ENCODE measurements at regions of chr12 and their contacts with region 1.

Region 1: DNA sequence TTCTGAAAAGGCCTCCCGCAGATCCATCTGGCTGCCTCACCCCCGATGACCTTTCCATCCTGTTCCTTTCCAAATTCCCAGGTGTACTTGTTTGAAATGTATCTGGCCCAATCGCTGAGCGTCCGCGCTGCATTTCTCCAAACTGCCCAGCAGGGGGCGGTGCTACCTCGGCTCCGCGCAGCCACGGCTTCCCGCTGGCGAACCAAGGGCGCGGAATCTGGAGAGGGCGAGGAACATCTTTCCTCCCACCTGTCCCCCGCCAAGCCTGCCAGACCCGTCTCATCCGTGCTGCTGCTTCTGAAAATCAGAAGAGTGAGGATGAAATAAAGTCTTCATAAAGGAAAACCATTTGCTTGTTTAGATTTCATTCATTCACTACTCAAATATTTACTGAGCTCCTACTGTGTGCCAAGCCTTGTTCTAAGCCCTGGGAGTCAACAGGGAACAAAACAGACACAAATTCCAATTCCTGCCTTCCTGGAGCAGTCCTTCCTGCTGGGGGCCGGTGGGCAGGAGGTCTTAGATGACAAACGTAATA is 16.8 kb upstream of the MYL2 start:
- DNase-seq: peak in 4 of 5 donors; percentile 38 to 44 (median 42)
- H3K4me3 ChIP-seq: no peak overlapping the region
- H3K4me3 Mint-ChIP-seq: peak overlapping the region in 4 of 8 donors; percentile 12 to 70 (median 52)
- H3K27ac ChIP-seq: no peak overlapping the region
- H3K27ac Mint-ChIP-seq: peak overlapping the region in 1 of 7 donors; percentile 13
- H3K4me1 ChIP-seq: peaks cover 7% of the 10 kb centered on the region
- H3K4me1 Mint-ChIP-seq: peaks cover 0 to 8% (median 3%) of the 10 kb centered on the region in 4 donors
- H3K27me3 ChIP-seq: peaks cover 3% of the 10 kb centered on the region
- H3K27me3 Mint-ChIP-seq: peaks cover 9 to 12% of the 10 kb centered on the region in 2 donors

Region 2: DNA sequence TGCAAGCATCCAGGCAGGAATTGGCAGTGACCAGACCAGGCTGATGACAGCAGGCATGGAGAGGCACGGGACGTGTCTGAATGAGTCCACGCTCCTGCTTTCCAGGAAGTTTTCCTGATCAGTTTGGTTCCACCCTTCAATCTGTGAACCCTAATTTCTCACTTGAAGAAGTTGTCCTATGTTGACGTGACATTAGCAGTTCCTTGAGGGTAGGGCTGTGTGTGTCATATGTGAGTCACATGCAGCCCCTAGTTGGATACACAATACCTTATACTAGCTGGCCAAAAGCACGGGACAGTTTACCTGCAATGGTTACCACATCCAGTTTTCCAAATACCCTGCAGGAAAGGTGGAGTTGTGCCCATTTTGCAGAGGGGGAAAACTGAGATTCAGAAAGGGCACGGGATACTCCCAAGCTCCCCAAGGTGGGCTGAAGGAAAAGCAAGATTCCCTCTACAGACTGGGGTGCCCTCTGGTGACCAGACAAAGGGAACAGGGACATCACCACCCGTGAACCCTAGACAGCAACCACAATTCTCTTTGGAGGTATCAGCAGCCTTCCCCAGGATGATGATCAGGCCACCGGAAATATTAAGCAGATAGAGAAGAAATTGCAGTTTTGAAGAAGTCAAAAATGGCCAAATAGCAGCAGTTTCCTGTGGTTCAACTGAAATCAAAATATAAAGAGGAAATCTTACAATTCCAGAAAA is 237.2 kb after region 1 on chr12:
- CTCF ChIA-PET with region 1: no interaction called
- POLR2A ChIA-PET with region 1: no interaction called
- intact Hi-C with region 1: loop called (anchors 5 kb)
- DNase-seq: peak in 1 of 5 donors; percentile 2
- H3K4me3 ChIP-seq: no peak overlapping the region
- H3K4me3 Mint-ChIP-seq: no peak overlapping the region
- H3K27ac ChIP-seq: no peak overlapping the region
- H3K27ac Mint-ChIP-seq: no peak overlapping the region
- H3K4me1 ChIP-seq: no peaks in the 10 kb centered on the region
- H3K4me1 Mint-ChIP-seq: no peaks in the 10 kb centered on the region
- H3K27me3 ChIP-seq: peaks cover 10% of the 10 kb centered on the region
- H3K27me3 Mint-ChIP-seq: peaks cover 8 to 29% of the 10 kb centered on the region in 2 donors

Region 3: DNA sequence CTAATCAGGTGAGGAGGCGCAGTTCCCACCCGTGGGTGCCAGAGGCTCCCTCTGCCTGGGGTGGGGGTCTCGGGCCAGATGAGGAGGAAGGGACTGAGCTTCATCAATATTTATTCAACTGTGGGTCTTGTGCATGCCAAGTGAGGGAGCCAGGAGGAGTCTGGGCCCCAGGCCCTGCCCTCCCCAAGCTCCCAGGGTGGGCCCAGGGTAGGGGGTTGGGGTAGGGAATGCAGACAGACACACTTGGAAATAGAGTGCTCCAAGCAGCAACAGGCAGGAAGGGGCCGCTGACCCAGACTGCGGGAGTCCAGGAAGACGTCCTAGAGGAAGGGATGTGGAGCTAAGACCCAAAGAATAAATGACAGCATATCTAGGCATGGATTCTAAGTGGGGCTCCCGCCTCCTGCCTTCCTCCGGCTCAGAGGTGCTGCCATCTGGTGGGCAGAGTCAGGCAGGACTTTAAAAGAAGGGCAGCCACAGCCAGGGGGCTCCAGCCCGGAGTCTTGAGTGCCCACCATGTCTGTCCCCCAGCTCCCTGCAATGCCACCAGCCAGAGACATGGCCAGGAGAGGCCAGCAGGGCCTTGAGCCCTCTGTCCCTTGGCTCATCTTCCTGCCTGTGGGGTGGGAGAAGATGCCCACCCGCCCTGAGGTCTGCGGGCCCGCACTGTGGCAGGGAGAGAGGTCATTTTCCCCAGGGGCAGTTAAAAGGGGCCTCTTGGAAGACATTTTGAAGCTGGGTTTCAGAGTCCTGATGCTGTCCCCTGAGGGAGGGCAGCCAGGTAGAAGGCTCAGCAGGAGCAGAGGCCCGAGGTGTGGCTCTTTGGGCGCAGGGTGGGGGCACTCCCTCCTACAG is 361.6 kb after region 1 on chr12:
- CTCF ChIA-PET with region 1: interaction called, 8 read pairs
- POLR2A ChIA-PET with region 1: no interaction called
- intact Hi-C with region 1: loop called (anchors 1 kb)
- DNase-seq: peak in 4 of 5 donors; percentile 16 to 30 (median 21)
- H3K4me3 ChIP-seq: no peak overlapping the region
- H3K4me3 Mint-ChIP-seq: no peak overlapping the region
- H3K27ac ChIP-seq: no peak overlapping the region
- H3K27ac Mint-ChIP-seq: no peak overlapping the region
- H3K4me1 ChIP-seq: no peaks in the 10 kb centered on the region
- H3K4me1 Mint-ChIP-seq: no peaks in the 10 kb centered on the region
- H3K27me3 ChIP-seq: no peaks in the 10 kb centered on the region
- H3K27me3 Mint-ChIP-seq: peaks cover 4% of the 10 kb centered on the region in 2 donors

Measured in CD4-positive, alpha-beta memory T cell (primary cell).